ENCODE measurements at regions of chr14 and their contacts with region 1.

Region 1: GRCh38 chr14:74860906-74861733 is 14.8 kb downstream of the PROX2 start:
- H3K4me3 ChIP-seq: no peak overlapping the region
- H3K27ac ChIP-seq: no peak overlapping the region
- H3K4me1 ChIP-seq: no peaks in the 10 kb centered on the region
- CTCF ChIP-seq: peak; percentile 70; the same call in 1 of the 2 replicates

Region 2: DNA sequence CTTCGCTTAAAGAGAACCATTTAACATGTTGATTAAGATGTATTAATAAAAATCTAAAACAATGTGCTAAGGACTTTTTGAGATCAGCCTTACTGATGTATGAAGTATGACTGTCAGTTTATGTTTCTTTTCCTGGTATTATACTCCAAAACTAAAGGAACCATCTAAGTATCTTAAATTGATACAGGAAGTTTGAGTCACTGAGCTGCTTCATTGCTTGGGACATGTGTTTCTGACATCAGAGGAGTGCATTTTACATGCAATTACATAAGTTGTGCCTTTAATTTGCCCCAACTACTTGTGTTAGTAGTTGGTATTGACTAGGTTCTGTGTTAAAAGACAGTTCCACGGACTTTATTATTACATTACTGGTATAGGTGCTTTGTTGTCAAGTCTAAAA is 36.1 kb before region 1 on chr14:
- CTCF ChIA-PET with region 1: no interaction called
- POLR2A ChIA-PET with region 1: no interaction called
- H3K4me3 ChIP-seq: no peak overlapping the region
- H3K27ac ChIP-seq: no peak overlapping the region
- H3K4me1 ChIP-seq: 0 out of 2 replicates have a peak, but pooled peaks cover 4% of the 10 kb centered on the region
- CTCF ChIP-seq: no peak

Region 3: DNA sequence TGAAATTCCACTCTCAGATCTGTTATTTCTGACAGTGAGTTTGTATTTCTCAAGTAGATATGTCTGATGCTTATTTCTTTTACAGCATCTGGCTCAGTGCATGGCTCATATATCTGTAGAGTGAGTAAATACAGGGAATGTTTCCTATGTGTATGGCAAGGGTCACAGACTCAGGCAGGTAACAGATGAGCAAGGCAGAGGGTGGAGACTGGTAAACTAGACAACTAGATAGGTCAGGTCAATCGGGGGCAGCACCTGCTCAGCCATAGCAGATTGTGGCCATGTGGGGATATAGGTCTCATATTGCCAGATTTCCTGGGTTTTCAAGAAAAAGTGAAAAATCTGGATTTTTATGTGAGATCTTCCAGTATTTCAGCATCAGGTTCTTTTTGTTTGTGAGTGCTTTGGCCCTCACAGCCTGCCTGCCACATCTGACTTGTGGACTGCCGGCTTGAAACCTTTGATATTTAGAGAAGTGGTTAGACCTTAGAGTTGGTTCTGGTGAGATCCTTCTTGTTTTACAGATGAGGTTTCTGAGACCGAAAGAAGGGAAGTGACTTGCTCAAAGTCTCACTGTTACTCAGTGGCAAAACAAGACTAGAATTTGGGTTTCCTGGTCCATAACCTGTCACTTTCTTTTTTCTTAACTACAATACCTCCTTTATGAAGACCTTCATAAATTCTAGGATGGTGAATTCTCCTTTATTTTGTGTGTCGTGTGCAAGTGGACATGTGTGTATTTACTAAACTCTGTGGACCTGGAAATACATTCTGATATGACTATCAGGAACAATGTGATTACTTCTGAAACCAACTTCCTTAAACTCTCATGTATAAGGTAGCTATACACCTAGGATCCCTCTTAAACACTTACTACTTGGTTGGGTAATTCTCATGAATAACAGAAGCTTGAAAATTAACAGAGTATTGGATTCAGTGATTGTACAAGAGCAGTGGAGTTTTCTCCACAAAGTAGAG is 19.6 kb before region 1 on chr14:
- CTCF ChIA-PET with region 1: interaction called, 73 read pairs
- POLR2A ChIA-PET with region 1: no interaction called
- H3K4me3 ChIP-seq: no peak overlapping the region
- H3K27ac ChIP-seq: no peak overlapping the region
- H3K4me1 ChIP-seq: no peaks in the 10 kb centered on the region
- CTCF ChIP-seq: no peak

Region 4: DNA sequence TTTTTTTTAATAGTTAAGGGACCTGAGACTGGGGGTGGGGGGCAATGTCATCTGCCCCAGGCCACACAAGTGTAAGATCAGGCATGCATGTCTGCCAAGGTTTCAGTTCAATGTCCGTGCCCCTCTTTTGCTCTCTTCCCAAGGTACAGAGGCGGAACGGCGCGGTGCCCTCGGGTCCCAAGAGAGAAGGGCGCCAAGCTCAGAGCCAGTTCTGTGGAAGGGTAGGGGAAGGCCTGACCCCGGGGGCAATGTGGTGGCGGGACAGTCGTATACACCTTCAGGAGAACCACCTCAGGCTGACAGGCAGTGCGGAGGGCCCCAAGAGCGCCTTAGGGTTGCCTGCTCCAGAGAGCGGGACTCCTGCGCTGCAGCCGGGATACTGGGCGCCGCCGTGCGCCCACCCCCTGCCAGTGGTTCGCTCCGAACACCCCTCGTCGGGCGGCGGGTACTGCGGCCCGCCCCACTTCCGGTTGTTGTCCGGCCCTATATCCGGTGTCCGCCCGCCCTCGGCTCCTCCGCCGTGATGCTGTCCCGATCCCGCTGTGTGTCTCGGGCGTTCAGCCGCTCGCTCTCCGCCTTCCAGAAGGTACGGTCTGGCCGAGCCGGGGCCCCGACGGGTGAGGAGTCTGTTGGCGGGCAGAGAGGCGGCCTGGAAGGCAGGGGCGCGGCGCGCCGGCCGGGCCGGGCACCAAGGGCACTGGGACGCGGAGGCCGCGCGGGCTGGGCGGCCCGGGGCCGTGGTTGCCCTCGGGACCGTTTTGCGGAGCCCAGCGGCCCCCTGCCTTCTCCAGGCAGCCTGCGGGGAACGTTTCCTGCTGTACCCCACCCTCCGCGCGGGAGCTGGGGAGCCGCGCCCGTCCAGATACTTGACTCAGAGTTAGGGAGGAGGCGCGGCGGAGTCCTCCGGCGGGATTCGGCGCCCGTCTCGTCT is 20.6 kb after region 1 on chr14 and contains the start of gene DLST:
- CTCF ChIA-PET with region 1: interaction called, 31 read pairs
- POLR2A ChIA-PET with region 1: no interaction called
- H3K4me3 ChIP-seq: peak within 1 kb of the TSS; percentile 90
- H3K27ac ChIP-seq: peak within 1 kb of the TSS; percentile 95
- H3K4me1 ChIP-seq: peaks cover 20% of the 10 kb centered on the region; the same call in 1 of the 2 replicates
- CTCF ChIP-seq: 0 out of 2 replicates have a peak, but pooled peaks have one; percentile 22

Region 5: DNA sequence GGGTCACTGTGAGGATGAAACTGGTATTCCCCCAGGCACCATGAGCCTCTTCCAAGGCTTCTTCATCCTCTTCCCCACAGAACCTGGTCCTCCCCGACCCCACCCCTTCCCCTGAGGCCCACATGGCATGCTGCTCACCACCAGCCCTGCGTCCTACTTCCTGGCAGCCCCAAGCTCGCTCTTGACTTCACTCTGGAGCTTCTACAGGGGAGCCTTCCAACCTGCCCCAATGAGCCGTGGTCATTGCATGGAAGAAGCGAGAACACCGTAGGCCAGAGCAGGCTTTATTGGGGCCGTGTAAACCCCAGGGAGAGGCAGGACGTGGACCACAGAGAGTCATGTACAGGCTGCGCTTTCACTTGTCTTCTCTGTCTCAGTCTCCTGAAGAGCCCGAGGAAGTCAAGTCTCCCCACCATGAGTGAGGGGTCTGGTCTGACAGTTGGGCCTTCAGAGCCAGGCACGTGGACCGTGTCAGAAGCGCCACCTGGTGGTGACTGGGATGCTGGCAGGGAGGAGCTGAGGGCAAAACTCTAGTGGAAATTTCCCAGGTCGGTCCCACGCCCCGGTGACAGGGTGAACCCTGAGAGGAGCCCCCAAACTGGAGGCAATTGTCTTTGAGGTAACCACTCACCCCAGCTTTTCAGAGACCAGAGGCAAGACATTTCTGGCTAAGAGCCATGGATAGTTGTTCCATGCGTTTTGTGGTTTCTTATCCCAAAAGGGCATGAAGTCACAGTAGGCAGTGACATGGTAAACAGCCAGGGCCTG is 44.4 kb after region 1 on chr14:
- CTCF ChIA-PET with region 1: interaction called, 195 read pairs
- POLR2A ChIA-PET with region 1: interaction called, 9 read pairs
- H3K4me3 ChIP-seq: no peak overlapping the region
- H3K27ac ChIP-seq: no peak overlapping the region
- H3K4me1 ChIP-seq: no peaks in the 10 kb centered on the region
- CTCF ChIP-seq: peak; percentile 66

Region 6: GRCh38 chr14:74945823-74946682 is 84.9 kb after region 1 on chr14:
- CTCF ChIA-PET with region 1: interaction called, 27 read pairs
- POLR2A ChIA-PET with region 1: no interaction called
- H3K4me3 ChIP-seq: no peak overlapping the region
- H3K27ac ChIP-seq: no peak overlapping the region
- H3K4me1 ChIP-seq: peaks cover 6% of the 10 kb centered on the region
- CTCF ChIP-seq: peak; percentile 72

Region 7: DNA sequence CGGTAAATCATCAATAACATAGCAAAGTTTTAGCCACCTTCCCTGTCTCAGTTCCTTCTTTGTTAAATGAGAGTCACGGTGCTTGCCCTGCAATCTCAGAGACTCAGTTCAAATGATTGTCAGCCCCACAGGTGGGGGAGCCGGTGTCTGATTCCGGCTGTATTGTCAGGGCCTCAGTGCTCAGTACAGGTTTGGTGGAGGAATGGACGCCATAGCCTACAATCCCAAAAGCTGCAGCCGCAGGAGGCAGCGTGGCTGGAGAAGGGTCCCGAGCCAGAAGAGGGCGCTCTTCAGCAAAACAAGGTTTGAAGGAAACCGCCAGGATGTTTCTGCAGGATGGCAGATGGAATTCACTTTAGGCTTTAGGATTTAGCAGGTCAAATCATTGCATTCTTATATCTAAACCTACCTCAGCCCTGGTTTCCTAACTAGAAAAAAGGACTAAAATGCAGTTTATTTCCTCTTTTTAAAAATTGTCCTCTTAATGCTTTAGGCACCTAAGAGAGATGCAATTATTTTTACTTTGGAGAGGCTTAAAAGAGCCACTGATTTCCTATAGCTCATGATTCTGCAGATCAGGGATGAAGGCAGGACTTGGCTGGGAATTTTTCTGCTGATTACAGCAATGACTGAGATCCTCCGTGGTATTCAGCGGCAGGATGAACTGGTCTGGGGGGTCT is 446.7 kb after region 1 on chr14:
- CTCF ChIA-PET with region 1: interaction called, 17 read pairs
- POLR2A ChIA-PET with region 1: no interaction called
- H3K4me3 ChIP-seq: no peak overlapping the region
- H3K27ac ChIP-seq: no peak overlapping the region
- H3K4me1 ChIP-seq: 0 out of 2 replicates have a peak, but pooled peaks cover 2% of the 10 kb centered on the region
- CTCF ChIP-seq: peak; percentile 67

Measured in HEK293 (cell line).